ENCODE measurements at regions of chr3 and their contacts with region 1.

Region 1: GRCh38 chr3:127455541-127456450 is 134.7 kb downstream of the TPRA1 start:
- DNase-seq: peak; percentile 97
- H3K4me3 Mint-ChIP-seq: peak overlapping the region; percentile 54
- H3K27ac Mint-ChIP-seq: no peak overlapping the region
- H3K4me1 Mint-ChIP-seq: peaks cover 21% of the 10 kb centered on the region
- H3K27me3 Mint-ChIP-seq: peaks cover 88% of the 10 kb centered on the region
- CTCF ChIP-seq: peak; percentile 99

Region 2: GRCh38 chr3:126522363-126522788 is 933.4 kb before region 1 on chr3:
- CTCF ChIA-PET with region 1: no interaction called
- intact Hi-C with region 1: loop called (anchors 10 kb)
- DNase-seq: peak; percentile 82
- H3K4me3 Mint-ChIP-seq: no peak overlapping the region
- H3K27ac Mint-ChIP-seq: no peak overlapping the region
- H3K4me1 Mint-ChIP-seq: no peaks in the 10 kb centered on the region
- H3K27me3 Mint-ChIP-seq: peaks cover 80% of the 10 kb centered on the region
- CTCF ChIP-seq: peak; percentile 98

Region 3: DNA sequence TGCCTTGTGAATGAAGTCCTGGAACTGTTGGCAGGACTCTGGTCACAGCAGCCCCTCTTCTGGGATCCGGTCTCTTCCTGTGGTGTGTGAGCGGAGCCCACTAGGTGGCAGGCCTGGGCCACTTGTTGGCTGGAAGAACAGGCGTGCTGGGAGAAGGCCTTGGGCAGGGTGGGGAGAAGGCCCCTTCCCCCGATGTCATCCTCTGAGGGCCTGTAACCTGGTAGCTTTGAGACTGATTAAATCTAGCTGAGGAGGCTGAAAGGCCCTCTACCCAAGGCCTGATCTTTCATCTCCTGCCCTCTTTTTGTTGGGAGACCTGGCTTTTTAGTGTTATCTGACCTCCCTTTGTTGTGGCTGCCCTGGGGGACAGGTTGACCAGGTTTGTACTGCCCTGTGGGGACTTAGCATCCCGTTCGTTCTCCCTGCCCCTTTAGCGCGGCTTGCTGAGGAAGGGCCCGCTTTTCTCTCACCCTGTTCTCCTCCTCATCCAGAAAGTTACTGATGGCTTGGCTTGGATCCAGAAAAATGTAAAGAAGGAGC is 703.4 kb before region 1 on chr3:
- CTCF ChIA-PET with region 1: interaction called, 18 read pairs
- intact Hi-C with region 1: loop called (anchors 2 kb)
- DNase-seq: peak; percentile 94
- H3K4me3 Mint-ChIP-seq: no peak overlapping the region
- H3K27ac Mint-ChIP-seq: no peak overlapping the region
- H3K4me1 Mint-ChIP-seq: peaks cover 55% of the 10 kb centered on the region
- H3K27me3 Mint-ChIP-seq: no peaks in the 10 kb centered on the region
- CTCF ChIP-seq: peak; percentile 97

Region 4: GRCh38 chr3:127254730-127255129 is 201.1 kb before region 1 on chr3:
- CTCF ChIA-PET with region 1: interaction called, 31 read pairs
- intact Hi-C with region 1: loop called (anchors 1 kb)
- DNase-seq: peak; percentile 57
- H3K4me3 Mint-ChIP-seq: no peak overlapping the region
- H3K27ac Mint-ChIP-seq: no peak overlapping the region
- H3K4me1 Mint-ChIP-seq: no peaks in the 10 kb centered on the region
- H3K27me3 Mint-ChIP-seq: peaks cover 81% of the 10 kb centered on the region
- CTCF ChIP-seq: peak; percentile 60

Region 5: GRCh38 chr3:127544192-127544802 is 88.5 kb after region 1 on chr3:
- CTCF ChIA-PET with region 1: interaction called, 8 read pairs
- intact Hi-C with region 1: loop called (anchors 5 kb)
- DNase-seq: peak; percentile 92
- H3K4me3 Mint-ChIP-seq: no peak overlapping the region
- H3K27ac Mint-ChIP-seq: no peak overlapping the region
- H3K4me1 Mint-ChIP-seq: peaks cover 7% of the 10 kb centered on the region
- H3K27me3 Mint-ChIP-seq: peaks cover 59% of the 10 kb centered on the region
- CTCF ChIP-seq: peak; percentile 96

Region 6: DNA sequence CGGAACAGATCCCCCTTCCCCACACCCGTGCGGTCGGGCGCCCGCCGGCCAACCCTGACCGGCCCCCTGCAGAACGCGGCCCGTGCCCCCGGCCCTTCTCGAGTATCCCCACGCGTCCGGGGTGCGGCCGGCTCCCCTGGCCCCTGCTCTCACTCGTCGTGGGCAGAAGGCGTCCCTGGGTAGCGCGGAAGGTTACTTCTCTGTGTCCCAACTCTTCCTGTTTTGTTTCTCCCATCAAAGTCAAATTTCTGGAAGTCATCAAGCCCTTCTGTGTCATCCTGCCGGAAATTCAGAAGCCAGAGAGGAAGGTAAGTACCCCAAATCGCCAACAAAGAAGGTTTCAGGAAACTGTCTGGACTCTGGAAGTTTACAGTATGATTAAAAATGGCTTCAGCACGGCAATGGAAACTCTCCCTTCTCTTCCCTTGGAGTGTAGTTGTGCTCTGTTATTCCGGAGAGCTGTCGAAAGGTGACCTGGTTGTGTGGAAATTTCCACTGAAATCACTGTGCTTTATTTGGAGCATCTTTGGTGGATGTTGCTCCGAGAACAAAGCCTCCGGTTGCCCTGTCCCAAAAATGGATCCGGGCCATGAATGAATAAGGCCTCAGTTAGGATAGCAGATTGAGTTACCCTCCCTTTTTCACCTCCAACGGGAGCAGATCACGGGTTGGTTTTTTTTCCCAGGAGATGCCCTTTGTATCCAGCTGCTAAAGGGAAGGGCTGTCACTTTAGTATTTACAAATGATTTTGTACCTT is 597.0 kb after region 1 on chr3:
- CTCF ChIA-PET with region 1: no interaction called
- intact Hi-C with region 1: no loop called
- DNase-seq: no peak
- H3K4me3 Mint-ChIP-seq: peak overlapping the region; percentile 89
- H3K27ac Mint-ChIP-seq: peak overlapping the region; percentile 93
- H3K4me1 Mint-ChIP-seq: peaks cover 42% of the 10 kb centered on the region
- H3K27me3 Mint-ChIP-seq: no peaks in the 10 kb centered on the region
- CTCF ChIP-seq: no peak

Measured in Calu3 (cell line).